Activated CD8-positive, alpha-beta memory T cell treated with anti-CD3 and anti-CD28 coated beads, Interleukin-2, amount 10 ng/mL, durations not matched to agents 7 days and 5 days (primary cell): ENCODE measurements at regions of chr14 and their contacts with region 1.

Region 1: DNA sequence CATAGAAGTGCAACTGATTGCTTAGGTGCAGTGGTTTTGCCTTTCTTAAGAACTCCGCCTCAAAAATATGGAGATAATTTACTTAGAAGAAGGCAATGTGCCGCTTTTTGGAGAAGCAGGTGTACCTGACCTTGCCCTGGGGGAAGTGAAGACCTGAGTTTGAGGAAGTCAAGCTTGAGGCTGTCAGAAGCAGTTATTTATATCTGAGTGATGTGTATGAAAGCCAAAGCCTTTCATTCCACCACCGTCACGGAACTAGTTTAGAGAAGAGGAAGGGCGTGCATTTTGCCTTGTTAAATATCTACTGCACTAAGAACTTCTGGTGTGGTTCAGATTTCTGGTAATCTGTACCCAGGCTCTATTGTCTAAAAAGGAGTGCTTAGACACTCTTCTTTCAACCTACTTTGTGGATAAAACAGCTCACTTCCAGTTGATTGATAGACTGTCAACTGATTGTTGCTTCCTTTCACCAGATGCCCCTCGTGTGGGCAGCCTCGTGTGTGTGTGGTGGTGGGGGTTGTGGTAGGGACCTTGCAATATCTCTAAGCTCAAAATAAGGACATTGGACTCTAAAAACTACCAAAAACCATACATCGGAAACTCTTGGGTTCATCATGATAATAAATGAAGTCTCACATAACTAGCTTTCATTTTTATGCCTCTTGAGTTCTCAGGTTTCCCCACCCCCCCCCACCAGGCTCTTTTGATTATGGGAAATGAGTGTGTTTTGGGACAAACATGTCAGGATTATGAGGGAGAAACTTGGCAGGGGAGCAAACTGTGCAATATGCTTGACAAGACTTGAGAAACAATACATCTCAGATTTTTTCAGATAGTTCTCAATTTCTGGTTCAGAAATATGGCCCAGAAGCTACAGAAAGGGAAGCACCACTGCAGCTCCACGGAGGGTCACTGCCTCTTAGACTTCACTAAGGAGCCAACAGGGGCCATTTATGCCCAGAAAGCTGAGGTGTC is 78.6 kb downstream of the ARF6 start:
- DNase-seq: peak; percentile 87
- ATAC-seq: peak; percentile 66
- H3K4me3 Mint-ChIP-seq: peak overlapping the region; percentile 74
- H3K27ac Mint-ChIP-seq: peak overlapping the region; percentile 99
- H3K4me1 Mint-ChIP-seq: peaks cover 67% of the 10 kb centered on the region
- H3K27me3 Mint-ChIP-seq: no peaks in the 10 kb centered on the region

Region 2: GRCh38 chr14:49886523-49886922 is 84.9 kb before region 1 on chr14:
- CTCF ChIA-PET with region 1: no interaction called
- DNase-seq: peak; percentile 63
- ATAC-seq: peak; percentile 73
- H3K4me3 Mint-ChIP-seq: peak overlapping the region; percentile 55
- H3K27ac Mint-ChIP-seq: peak overlapping the region; percentile 70
- H3K4me1 Mint-ChIP-seq: peaks cover 22% of the 10 kb centered on the region
- H3K27me3 Mint-ChIP-seq: no peaks in the 10 kb centered on the region

Region 3: GRCh38 chr14:49946320-49947141 is 24.9 kb before region 1 on chr14:
- CTCF ChIA-PET with region 1: interaction called, 10 read pairs
- DNase-seq: peak; percentile 46
- ATAC-seq: peak; percentile 59
- H3K4me3 Mint-ChIP-seq: peak overlapping the region; percentile 30
- H3K27ac Mint-ChIP-seq: peak overlapping the region; percentile 94
- H3K4me1 Mint-ChIP-seq: peaks cover 67% of the 10 kb centered on the region
- H3K27me3 Mint-ChIP-seq: no peaks in the 10 kb centered on the region

Region 4: DNA sequence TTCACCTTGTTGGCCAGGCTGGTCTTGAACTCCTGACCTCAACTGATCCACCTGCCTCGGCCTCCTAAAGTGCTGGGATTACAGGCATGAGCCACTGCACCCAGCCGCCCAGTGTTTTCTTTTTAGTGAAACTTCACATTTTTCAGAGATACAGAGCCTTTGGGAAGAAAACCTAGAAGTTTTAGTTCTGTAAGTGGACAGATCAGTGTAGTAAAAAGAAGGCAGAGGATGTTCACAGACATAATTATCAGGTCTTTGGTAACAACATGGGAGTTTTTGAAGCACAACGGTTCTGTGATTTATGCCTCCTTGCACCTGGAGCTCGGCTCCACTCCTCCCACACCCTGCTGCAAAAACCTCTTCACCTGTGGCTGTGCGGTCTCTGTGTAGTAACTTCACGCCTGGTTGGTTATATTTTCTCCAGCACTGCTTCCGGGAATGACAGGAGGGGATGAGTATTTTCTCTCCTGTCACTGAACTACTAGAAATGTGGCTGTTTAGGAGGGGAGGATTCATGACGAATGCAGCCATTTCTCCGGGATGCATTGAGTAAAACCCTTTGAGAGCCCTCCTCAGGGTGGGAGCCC is 11.5 kb before region 1 on chr14:
- CTCF ChIA-PET with region 1: interaction called, 13 read pairs
- DNase-seq: no peak
- ATAC-seq: no peak
- H3K4me3 Mint-ChIP-seq: no peak overlapping the region
- H3K27ac Mint-ChIP-seq: no peak overlapping the region
- H3K4me1 Mint-ChIP-seq: peaks cover 21% of the 10 kb centered on the region
- H3K27me3 Mint-ChIP-seq: no peaks in the 10 kb centered on the region